B cell (primary cell): ENCODE measurements at regions of chr9 and their contacts with region 1.

Region 1: DNA sequence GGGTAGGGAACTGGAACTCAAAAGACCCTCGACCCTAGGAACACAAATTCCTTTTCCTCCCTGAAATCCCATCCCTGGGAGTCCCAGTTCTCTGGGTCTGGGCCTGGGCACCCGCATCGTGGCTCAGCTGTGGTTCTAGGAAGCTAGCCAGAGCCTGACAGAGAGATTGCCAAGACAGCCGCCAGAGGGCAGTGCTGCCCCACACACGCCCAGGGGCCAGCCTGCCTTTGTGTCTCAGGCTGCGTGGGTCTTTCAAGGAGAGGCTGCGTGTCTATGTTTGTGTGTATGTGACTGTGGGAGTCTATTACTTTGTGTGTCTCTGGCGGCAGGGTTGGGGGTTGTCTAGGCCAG is 32.0 kb upstream of the TTLL11 start:
- DNase-seq: peak; percentile 83
- ATAC-seq: peak; percentile 83
- H3K4me3 ChIP-seq: no peak overlapping the region
- H3K4me3 Mint-ChIP-seq: peak overlapping the region; percentile 36
- H3K27ac ChIP-seq: no peak overlapping the region
- H3K27ac Mint-ChIP-seq: no peak overlapping the region
- H3K4me1 ChIP-seq: peaks cover 17 to 26% of the 10 kb centered on the region in 2 donors
- H3K4me1 Mint-ChIP-seq: peaks cover 13% of the 10 kb centered on the region
- H3K27me3 ChIP-seq: peaks cover 0 to 40% (median 22%) of the 10 kb centered on the region in 4 experiments
- H3K27me3 Mint-ChIP-seq: peaks cover 57% of the 10 kb centered on the region
- CTCF ChIP-seq: peak; percentile 92

Region 2: DNA sequence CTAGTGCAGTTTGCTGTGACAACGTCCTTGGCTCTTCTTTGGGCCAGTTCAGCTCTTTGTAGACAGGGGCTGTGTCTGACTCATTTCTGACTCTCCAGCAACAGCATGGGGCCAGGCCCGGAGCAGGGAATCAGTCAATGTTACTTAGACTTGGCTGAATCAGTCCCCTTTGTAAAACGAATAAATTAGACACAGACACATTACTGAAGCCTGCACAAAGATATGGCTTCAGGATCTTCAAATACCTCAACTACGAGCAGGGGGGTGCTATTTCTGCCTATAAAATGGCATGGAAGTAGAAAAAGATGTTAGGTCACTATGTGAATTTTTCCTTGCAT is 236.7 kb before region 1 on chr9:
- CTCF ChIA-PET with region 1: no interaction called
- POLR2A ChIA-PET with region 1: no interaction called
- intact Hi-C with region 1: no loop called
- DNase-seq: no peak
- ATAC-seq: no peak
- H3K4me3 ChIP-seq: no peak overlapping the region
- H3K4me3 Mint-ChIP-seq: no peak overlapping the region
- H3K27ac ChIP-seq: no peak overlapping the region
- H3K27ac Mint-ChIP-seq: no peak overlapping the region
- H3K4me1 ChIP-seq: peaks cover 0 to 4% of the 10 kb centered on the region in 2 donors
- H3K4me1 Mint-ChIP-seq: peaks cover 21% of the 10 kb centered on the region
- H3K27me3 ChIP-seq: no peaks in the 10 kb centered on the region
- H3K27me3 Mint-ChIP-seq: no peaks in the 10 kb centered on the region
- CTCF ChIP-seq: no peak

Region 3: DNA sequence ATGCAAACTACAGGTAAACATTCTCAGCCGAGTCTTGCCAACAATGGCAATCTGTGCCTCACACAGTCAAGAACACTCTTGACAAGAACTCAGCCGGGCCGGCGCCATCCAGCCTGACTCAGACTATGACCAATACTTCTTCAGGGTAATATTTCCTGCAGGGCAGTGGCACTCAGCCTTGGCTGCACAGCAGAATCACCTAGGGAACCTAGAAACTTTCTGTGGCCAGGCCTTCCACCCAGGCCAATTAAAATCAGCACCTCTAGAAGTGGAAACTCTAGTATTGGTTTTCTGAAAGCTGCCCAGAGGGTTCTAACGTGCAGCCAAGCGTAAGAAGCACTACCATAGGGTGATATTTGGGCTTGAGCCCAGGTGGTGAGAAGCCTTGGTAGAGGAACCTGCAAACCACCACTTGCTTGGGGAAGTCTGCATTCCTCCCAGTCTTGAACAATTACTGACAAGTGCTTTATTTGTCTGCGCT is 152.6 kb before region 1 on chr9:
- CTCF ChIA-PET with region 1: no interaction called
- POLR2A ChIA-PET with region 1: no interaction called
- intact Hi-C with region 1: no loop called
- DNase-seq: no peak
- ATAC-seq: peak; percentile 82
- H3K4me3 ChIP-seq: no peak overlapping the region
- H3K4me3 Mint-ChIP-seq: peak overlapping the region; percentile 27
- H3K27ac ChIP-seq: no peak overlapping the region
- H3K27ac Mint-ChIP-seq: peak overlapping the region; percentile 26
- H3K4me1 ChIP-seq: peaks cover 0 to 13% of the 10 kb centered on the region in 2 donors
- H3K4me1 Mint-ChIP-seq: peaks cover 26% of the 10 kb centered on the region
- H3K27me3 ChIP-seq: no peaks in the 10 kb centered on the region
- H3K27me3 Mint-ChIP-seq: no peaks in the 10 kb centered on the region
- CTCF ChIP-seq: no peak

Region 4: DNA sequence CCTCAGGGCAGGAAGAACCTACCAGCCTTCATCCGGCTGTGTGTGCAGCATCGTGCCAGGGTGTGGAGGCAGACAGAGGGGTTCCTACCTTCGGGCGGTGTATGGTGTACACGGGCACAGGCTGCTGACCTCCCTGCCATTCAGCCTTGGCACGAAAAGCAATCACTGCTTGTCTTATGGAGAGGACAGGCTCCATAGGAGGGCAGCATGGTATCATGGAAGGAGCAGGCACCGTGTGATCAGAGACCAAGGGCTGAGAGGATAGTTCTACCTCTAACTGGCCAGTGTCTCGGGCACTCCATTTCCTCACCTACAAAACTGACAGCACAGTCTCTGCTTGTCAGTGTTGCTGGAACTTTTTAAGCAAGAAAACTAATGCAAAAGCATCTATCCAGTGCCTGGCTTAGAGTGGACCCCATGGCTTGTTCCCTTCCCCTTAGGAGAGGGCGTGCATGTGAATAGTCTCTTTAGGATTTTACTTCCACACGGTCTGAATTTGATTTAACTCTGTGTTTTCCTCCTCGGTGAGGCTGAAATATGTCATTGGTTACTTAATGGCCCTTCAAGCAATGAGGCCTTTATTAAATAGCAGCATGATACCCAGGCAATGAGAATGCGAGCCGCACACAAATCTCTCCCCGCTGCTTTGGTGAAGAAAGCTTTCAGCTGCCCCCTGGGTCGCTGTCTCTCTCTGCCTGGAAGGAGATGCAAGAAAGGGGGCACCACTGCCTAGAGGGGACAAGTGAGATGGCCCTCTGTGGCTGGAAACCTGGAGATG is 54.2 kb before region 1 on chr9:
- CTCF ChIA-PET with region 1: no interaction called
- POLR2A ChIA-PET with region 1: no interaction called
- intact Hi-C with region 1: no loop called
- DNase-seq: no peak
- ATAC-seq: no peak
- H3K4me3 ChIP-seq: no peak overlapping the region
- H3K4me3 Mint-ChIP-seq: no peak overlapping the region
- H3K27ac ChIP-seq: no peak overlapping the region
- H3K27ac Mint-ChIP-seq: no peak overlapping the region
- H3K4me1 ChIP-seq: no peaks in the 10 kb centered on the region
- H3K4me1 Mint-ChIP-seq: no peaks in the 10 kb centered on the region
- H3K27me3 ChIP-seq: no peaks in the 10 kb centered on the region
- H3K27me3 Mint-ChIP-seq: no peaks in the 10 kb centered on the region
- CTCF ChIP-seq: no peak

Region 5: GRCh38 chr9:122144836-122145591 is 19.9 kb after region 1 on chr9:
- CTCF ChIA-PET with region 1: interaction called, 18 read pairs
- POLR2A ChIA-PET with region 1: no interaction called
- intact Hi-C with region 1: no loop called
- DNase-seq: no peak
- ATAC-seq: no peak
- H3K4me3 ChIP-seq: no peak overlapping the region
- H3K4me3 Mint-ChIP-seq: no peak overlapping the region
- H3K27ac ChIP-seq: no peak overlapping the region
- H3K27ac Mint-ChIP-seq: no peak overlapping the region
- H3K4me1 ChIP-seq: no peaks in the 10 kb centered on the region
- H3K4me1 Mint-ChIP-seq: no peaks in the 10 kb centered on the region
- H3K27me3 ChIP-seq: no peaks in the 10 kb centered on the region
- H3K27me3 Mint-ChIP-seq: no peaks in the 10 kb centered on the region
- CTCF ChIP-seq: no peak

Region 6: DNA sequence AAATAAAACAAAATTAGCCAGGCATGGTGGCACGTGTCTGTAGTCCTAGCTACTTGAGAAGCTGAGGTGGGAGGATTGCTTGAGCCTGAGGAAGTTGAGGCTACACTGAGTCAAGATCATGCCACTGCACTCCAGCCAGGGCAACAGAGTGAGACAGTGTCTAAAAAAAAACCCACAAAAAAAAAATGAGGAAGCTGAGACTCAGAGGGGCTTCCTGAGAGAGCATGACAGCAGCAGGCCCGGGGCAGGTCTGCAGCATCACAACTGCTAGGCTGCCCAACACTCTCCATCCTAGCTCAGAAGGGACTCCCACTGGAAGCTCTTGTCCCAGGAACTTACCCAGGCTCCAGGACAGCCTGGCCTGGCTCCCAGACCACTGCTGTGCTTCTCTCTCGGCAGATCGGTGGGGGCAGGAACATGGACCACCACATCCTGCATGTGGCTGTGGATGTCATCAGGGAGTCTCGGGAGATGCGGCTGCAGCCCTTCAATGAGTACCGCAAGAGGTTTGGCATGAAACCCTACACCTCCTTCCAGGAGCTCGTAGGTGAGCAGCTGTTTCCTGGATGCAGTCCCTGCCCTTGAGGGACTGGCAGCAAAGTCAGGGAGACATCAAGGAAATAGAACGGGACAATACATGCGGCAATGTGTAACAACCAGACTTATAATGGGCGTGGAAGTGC is 264.8 kb after region 1 on chr9:
- CTCF ChIA-PET with region 1: interaction called, 11 read pairs
- POLR2A ChIA-PET with region 1: no interaction called
- intact Hi-C with region 1: no loop called
- DNase-seq: peak; percentile 82
- ATAC-seq: peak; percentile 97
- H3K4me3 ChIP-seq: peak overlapping the region in 2 of 5 experiments; percentile 27 to 49
- H3K4me3 Mint-ChIP-seq: peak overlapping the region; percentile 60
- H3K27ac ChIP-seq: peak overlapping the region; percentile 54 to 69
- H3K27ac Mint-ChIP-seq: peak overlapping the region; percentile 86
- H3K4me1 ChIP-seq: peaks cover 33 to 37% of the 10 kb centered on the region in 2 donors
- H3K4me1 Mint-ChIP-seq: peaks cover 39% of the 10 kb centered on the region
- H3K27me3 ChIP-seq: no peaks in the 10 kb centered on the region
- H3K27me3 Mint-ChIP-seq: no peaks in the 10 kb centered on the region
- CTCF ChIP-seq: no peak

Region 7: DNA sequence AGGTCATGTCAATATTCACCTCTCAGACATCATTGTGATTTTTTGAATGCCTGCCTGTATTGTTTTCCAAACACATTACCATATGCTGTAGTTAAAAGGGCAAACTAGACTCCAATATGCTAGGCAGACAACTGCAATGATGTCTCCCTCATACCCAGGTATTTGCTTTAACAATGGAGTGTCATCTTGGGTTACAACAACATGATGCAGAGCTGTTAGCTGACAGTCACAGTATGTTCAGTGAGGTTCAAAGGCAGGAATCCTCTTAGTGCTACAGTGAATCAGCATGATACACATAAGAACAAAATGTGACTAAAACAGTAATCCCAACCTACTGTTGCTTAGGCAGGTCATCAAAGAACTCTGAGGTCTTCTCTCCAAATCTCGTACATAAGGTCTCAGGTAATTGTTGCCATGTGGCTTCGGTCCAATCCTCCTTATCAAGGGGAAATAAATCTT is 328.6 kb after region 1 on chr9:
- CTCF ChIA-PET with region 1: interaction called, 19 read pairs
- POLR2A ChIA-PET with region 1: no interaction called
- intact Hi-C with region 1: loop called (anchors 1 kb)
- DNase-seq: no peak
- ATAC-seq: no peak
- H3K4me3 ChIP-seq: no peak overlapping the region
- H3K4me3 Mint-ChIP-seq: no peak overlapping the region
- H3K27ac ChIP-seq: no peak overlapping the region
- H3K27ac Mint-ChIP-seq: no peak overlapping the region
- H3K4me1 ChIP-seq: no peaks in the 10 kb centered on the region
- H3K4me1 Mint-ChIP-seq: no peaks in the 10 kb centered on the region
- H3K27me3 ChIP-seq: peaks cover 0 to 4% (median 0%) of the 10 kb centered on the region in 4 experiments
- H3K27me3 Mint-ChIP-seq: peaks cover 22% of the 10 kb centered on the region
- CTCF ChIP-seq: no peak

Region 8: GRCh38 chr9:122810306-122810946 is 685.3 kb after region 1 on chr9:
- CTCF ChIA-PET with region 1: interaction called, 33 read pairs
- POLR2A ChIA-PET with region 1: no interaction called
- intact Hi-C with region 1: loop called (anchors 1 kb)
- DNase-seq: peak; percentile 82
- ATAC-seq: peak; percentile 91
- H3K4me3 ChIP-seq: no peak overlapping the region
- H3K4me3 Mint-ChIP-seq: no peak overlapping the region
- H3K27ac ChIP-seq: no peak overlapping the region
- H3K27ac Mint-ChIP-seq: no peak overlapping the region
- H3K4me1 ChIP-seq: peaks cover 5 to 8% of the 10 kb centered on the region in 2 donors
- H3K4me1 Mint-ChIP-seq: peaks cover 8% of the 10 kb centered on the region
- H3K27me3 ChIP-seq: no peaks in the 10 kb centered on the region
- H3K27me3 Mint-ChIP-seq: no peaks in the 10 kb centered on the region
- CTCF ChIP-seq: peak; percentile 88